Right ventricle myocardium inferior (tissue), 1 donor: ENCODE measurements at regions of chr7 and their contacts with region 1.

Region 1: DNA sequence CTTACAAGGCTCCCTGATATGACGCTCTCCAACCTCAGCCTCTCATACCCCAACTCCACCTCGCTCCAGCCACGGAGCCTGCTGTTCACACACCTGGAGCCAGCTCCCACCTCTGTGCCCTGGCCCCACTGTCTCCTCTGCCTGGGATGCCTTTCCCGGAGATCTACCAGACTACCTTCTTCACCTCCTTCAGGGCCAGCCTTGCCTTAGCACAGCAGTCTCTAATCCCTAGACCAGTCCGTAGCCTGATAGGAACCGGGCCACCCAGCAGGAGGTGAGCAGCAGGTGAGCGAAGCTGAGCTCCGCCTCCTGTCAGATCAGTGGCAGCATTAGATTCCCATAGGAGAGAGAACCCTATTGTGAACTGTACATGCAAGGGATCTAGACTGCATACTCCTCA is 23.2 kb upstream of the SMURF1 start:
- DNase-seq: no peak
- ATAC-seq: no peak

Region 2: GRCh38 chr7:99289185-99289584 is 122.1 kb after region 1 on chr7:
- intact Hi-C with region 1: loop called (anchors 10 kb)
- DNase-seq: no peak
- ATAC-seq: no peak